Ovary (tissue), 10 donors: ENCODE measurements at regions of chr7 and their contacts with region 1.

Region 1: DNA sequence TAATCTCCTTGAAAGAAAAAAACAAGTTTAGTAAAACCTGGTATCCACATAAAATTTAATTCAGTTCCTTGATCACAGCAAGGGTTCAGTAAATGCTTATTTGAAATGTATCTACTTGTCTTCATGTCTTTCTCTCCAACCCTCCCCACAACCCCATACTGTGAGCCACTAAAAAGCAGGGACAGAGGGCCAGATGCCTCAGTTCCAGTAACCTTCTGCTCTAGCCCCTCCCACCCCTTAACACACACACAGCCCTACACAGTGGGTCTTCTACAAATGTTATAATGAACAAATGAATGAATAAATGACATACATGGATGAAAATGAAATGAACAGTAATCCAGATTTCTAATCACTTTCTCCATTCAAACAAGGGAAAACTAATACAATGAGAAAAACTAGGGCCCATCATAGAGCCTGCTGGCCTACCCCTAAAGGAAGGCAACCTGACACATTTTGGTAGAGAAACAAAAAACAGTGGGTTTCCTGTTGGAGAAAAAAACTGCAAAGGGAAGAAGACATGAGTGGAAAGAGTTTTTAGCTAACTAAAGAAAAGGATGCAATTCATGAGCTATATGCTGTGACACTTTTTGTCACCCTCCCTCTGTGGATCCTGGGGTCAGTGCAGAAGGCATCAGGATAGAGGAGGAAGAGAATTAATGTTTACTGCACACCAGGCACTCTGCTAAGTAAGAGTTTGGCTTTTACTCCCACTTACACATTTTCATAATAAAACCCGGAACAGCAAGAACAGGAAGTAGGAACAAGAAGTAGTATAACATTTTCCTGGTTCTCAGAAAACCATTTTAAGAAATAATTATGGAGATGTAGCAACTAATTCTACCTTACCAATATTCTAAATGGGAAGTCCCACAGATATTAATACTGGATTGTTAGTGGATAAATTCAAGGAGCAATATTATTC is 38.1 kb downstream of the ELMO1 start:
- DNase-seq: no peak
- H3K4me3 ChIP-seq: no peak overlapping the region
- H3K27ac ChIP-seq: no peak overlapping the region
- H3K4me1 ChIP-seq: peaks cover 4% of the 10 kb centered on the region
- H3K27me3 ChIP-seq: no peaks in the 10 kb centered on the region
- CTCF ChIP-seq: no peak
- EP300 ChIP-seq: no peak
- POLR2A ChIP-seq: no peak

Region 2: DNA sequence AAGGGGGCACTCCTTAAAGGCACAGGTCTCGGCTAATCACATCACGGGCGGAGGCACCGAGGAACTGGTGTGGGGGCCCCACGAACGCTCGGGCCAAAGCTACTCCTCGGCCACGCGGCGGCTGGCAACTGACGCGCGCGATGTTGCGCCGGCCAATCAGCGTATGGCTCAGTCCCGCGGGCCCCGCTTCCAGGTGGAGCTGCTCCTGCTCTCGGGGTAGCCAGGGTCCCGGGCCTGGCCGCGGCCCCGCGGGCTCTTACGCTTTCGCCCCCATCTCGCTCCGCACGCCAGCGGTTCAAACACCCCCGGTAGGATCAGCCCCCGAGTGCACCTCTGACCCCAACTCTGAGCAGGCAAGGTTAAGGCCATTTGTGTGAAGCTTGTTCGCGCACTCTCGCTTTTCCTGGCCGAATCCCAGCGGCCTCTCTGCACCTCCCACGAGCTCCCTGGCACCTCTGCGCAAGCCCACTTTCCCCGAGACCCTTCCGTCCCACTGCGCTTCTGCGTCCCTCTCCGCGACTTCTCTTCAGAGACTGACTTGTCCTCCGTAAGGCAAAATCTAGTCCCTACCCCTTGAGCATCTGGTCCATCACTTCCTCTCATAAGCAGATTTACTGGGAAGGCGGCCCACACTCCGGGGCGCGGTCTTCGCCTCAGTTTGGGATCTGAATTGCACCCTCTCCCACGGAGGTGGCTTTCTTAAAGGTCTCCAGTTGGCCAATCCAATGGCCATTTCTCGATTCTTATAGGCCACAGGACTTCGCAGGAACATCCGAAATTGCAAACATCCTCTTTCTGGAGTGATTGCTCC is 1955.8 kb before region 1 on chr7:
- intact Hi-C with region 1: loop called in 1 of 4 experiments (anchors 5 kb)
- DNase-seq: peak in 1 of 5 donors; percentile 33
- H3K4me3 ChIP-seq: no peak overlapping the region
- H3K27ac ChIP-seq: no peak overlapping the region
- H3K4me1 ChIP-seq: no peaks in the 10 kb centered on the region
- H3K27me3 ChIP-seq: no peaks in the 10 kb centered on the region
- CTCF ChIP-seq: no peak
- EP300 ChIP-seq: no peak
- POLR2A ChIP-seq: no peak

Region 3: DNA sequence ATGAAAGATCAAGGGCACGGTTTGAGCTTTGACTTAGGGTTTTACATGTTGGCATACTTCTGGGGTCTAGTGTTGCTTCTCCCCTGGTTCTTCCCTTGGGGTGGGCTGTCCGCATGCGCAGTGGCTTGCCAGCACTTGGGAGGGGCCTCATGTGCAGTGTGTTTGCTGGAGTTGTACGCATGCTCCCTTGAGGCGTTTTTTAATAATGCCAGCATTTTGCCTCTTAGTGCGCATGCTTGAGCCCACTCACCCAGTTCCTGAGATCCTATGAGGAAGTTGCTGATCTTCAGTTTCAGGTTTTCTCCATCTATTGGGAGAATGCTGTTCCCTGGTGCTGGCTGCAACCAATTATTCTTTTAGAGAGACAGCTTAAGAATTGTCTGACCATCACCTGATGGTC is 159.6 kb after region 1 on chr7:
- intact Hi-C with region 1: no loop called
- DNase-seq: no peak
- H3K4me3 ChIP-seq: no peak overlapping the region
- H3K27ac ChIP-seq: no peak overlapping the region
- H3K4me1 ChIP-seq: no peaks in the 10 kb centered on the region
- H3K27me3 ChIP-seq: no peaks in the 10 kb centered on the region
- CTCF ChIP-seq: no peak
- EP300 ChIP-seq: no peak
- POLR2A ChIP-seq: no peak